CD4-positive, alpha-beta T cell (primary cell): ENCODE measurements at regions of chr17 and their contacts with region 1.

Region 1: GRCh38 chr17:76384222-76384986 is at the start of gene SPHK1:
- DNase-seq: peak in 12 of 14 experiments; percentile 23 to 80 (median 55)
- ATAC-seq: peak; percentile 40
- H3K4me3 ChIP-seq: peak within 1 kb of the TSS; percentile 62
- H3K4me3 Mint-ChIP-seq: peak within 1 kb of the TSS; percentile 92
- H3K27ac ChIP-seq: no peak within 1 kb of the TSS
- H3K27ac Mint-ChIP-seq: no peak within 1 kb of the TSS
- H3K4me1 ChIP-seq: peaks cover 33% of the 10 kb centered on the region
- H3K4me1 Mint-ChIP-seq: peaks cover 6% of the 10 kb centered on the region
- H3K27me3 ChIP-seq: peaks cover 4 to 7% of the 10 kb centered on the region in 2 experiments
- H3K27me3 Mint-ChIP-seq: peaks cover 4% of the 10 kb centered on the region
- CTCF ChIP-seq: no peak
- total RNA-seq, gene SPHK1: 0.45 to 1.1 TPM

Region 2: GRCh38 chr17:75978938-75979704 is 405.3 kb before region 1 on chr17 and contains the starts of genes ACOX1 and TEN1:
- CTCF ChIA-PET with region 1: no interaction called
- POLR2A ChIA-PET with region 1: interaction called, 3 read pairs
- intact Hi-C with region 1: loop called in 1 of 2 experiments (anchors 10 kb)
- DNase-seq: peak; percentile 89 to 97 (median 94)
- ATAC-seq: peak; percentile 92
- H3K4me3 ChIP-seq: peak within 1 kb of the TSS; percentile 99
- H3K4me3 Mint-ChIP-seq: peak within 1 kb of the TSS; percentile 95
- H3K27ac ChIP-seq: peak within 1 kb of the TSS; percentile 91 to 94
- H3K27ac Mint-ChIP-seq: peak within 1 kb of the TSS; percentile 100
- H3K4me1 ChIP-seq: peaks cover 19% of the 10 kb centered on the region
- H3K4me1 Mint-ChIP-seq: peaks cover 51% of the 10 kb centered on the region
- H3K27me3 ChIP-seq: no peaks in the 10 kb centered on the region
- H3K27me3 Mint-ChIP-seq: no peaks in the 10 kb centered on the region
- CTCF ChIP-seq: no peak
- total RNA-seq, gene ACOX1: 14.5 to 17.9 TPM
- total RNA-seq, gene TEN1: 13.0 to 13.8 TPM

Region 3: DNA sequence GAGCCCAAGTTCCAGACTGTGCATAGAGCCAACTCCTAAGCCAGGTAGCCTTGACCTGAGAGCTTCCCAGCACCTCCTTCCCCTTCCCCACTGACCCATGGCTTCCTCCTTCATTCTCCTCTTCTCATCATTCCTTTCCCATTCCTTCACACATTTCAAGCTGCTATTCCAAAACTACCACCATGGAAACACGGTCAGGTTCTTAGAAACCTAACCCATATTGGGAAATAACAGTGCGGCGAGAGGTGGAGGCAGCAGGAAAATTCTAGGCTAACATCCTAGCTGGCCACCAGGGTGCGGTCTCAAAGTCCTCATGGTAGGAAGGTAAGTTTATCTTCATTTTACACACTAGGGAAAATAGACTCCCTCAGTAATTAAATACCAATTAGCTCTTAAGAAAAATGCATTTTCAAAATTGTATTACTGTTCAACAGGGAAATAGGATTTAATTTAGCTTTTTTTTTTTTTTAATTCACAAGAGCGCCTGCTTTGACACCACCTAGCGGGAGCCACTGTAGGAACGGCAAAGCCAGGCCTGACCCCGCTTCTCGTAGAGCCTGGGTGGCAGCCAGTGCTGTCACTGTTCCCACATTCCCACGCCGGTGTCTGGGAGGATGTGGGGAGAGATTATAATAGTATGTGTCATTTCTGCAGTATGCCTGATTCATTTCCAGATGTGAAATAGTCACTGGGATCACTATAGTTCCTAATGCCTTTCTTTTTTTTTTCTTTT is 14.0 kb before region 1 on chr17:
- CTCF ChIA-PET with region 1: interaction called, 11 read pairs
- POLR2A ChIA-PET with region 1: interaction called, 3 read pairs
- intact Hi-C with region 1: no loop called
- DNase-seq: no peak
- ATAC-seq: no peak
- H3K4me3 ChIP-seq: no peak overlapping the region
- H3K4me3 Mint-ChIP-seq: no peak overlapping the region
- H3K27ac ChIP-seq: no peak overlapping the region
- H3K27ac Mint-ChIP-seq: no peak overlapping the region
- H3K4me1 ChIP-seq: no peaks in the 10 kb centered on the region
- H3K4me1 Mint-ChIP-seq: no peaks in the 10 kb centered on the region
- H3K27me3 ChIP-seq: no peaks in the 10 kb centered on the region
- H3K27me3 Mint-ChIP-seq: no peaks in the 10 kb centered on the region
- CTCF ChIP-seq: no peak

Region 4: GRCh38 chr17:76397687-76398487 is 13.5 kb after region 1 on chr17:
- CTCF ChIA-PET with region 1: interaction called, 31 read pairs
- POLR2A ChIA-PET with region 1: interaction called, 7 read pairs
- intact Hi-C with region 1: no loop called
- DNase-seq: peak; percentile 76 to 90 (median 83)
- ATAC-seq: peak; percentile 92
- H3K4me3 ChIP-seq: no peak overlapping the region
- H3K4me3 Mint-ChIP-seq: no peak overlapping the region
- H3K27ac ChIP-seq: no peak overlapping the region
- H3K27ac Mint-ChIP-seq: no peak overlapping the region
- H3K4me1 ChIP-seq: no peaks in the 10 kb centered on the region
- H3K4me1 Mint-ChIP-seq: no peaks in the 10 kb centered on the region
- H3K27me3 ChIP-seq: no peaks in the 10 kb centered on the region
- H3K27me3 Mint-ChIP-seq: no peaks in the 10 kb centered on the region
- CTCF ChIP-seq: peak; percentile 94